ENCODE measurements at regions of chr1 and their contacts with region 1.

Region 1: DNA sequence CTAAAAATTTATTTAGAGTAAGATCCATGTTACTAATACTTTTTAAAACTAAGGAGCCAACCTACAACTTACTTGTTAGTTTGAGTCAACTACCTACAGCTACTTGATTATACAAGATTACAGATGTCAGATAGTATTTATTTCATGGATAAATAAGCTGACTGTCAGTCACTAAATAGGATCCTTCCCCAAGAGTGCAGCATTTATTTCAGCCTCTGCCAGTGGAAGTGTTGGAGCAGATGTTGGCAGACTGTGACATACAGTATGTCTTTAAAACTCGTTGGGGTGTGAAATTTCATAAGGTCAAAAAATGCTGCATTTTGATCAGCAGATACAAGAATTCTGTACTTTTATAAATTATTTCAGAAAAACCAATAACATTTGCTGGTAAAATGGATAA is 156.2 kb downstream of the AKT3 start:
- DNase-seq: no peak
- H3K4me3 ChIP-seq: no peak overlapping the region
- H3K4me3 Mint-ChIP-seq: no peak overlapping the region
- H3K27ac ChIP-seq: no peak overlapping the region
- H3K27ac Mint-ChIP-seq: no peak overlapping the region
- H3K4me1 ChIP-seq: no peaks in the 10 kb centered on the region
- H3K4me1 Mint-ChIP-seq: no peaks in the 10 kb centered on the region
- H3K27me3 ChIP-seq: no peaks in the 10 kb centered on the region
- H3K27me3 Mint-ChIP-seq: no peaks in the 10 kb centered on the region
- CTCF ChIP-seq: no peak

Region 2: GRCh38 chr1:243396876-243397275 is 296.9 kb before region 1 on chr1:
- intact Hi-C with region 1: no loop called
- DNase-seq: no peak
- H3K4me3 ChIP-seq: no peak overlapping the region
- H3K4me3 Mint-ChIP-seq: no peak overlapping the region
- H3K27ac ChIP-seq: no peak overlapping the region
- H3K27ac Mint-ChIP-seq: no peak overlapping the region
- H3K4me1 ChIP-seq: no peaks in the 10 kb centered on the region
- H3K4me1 Mint-ChIP-seq: no peaks in the 10 kb centered on the region
- H3K27me3 ChIP-seq: no peaks in the 10 kb centered on the region
- H3K27me3 Mint-ChIP-seq: no peaks in the 10 kb centered on the region
- CTCF ChIP-seq: no peak

Region 3: DNA sequence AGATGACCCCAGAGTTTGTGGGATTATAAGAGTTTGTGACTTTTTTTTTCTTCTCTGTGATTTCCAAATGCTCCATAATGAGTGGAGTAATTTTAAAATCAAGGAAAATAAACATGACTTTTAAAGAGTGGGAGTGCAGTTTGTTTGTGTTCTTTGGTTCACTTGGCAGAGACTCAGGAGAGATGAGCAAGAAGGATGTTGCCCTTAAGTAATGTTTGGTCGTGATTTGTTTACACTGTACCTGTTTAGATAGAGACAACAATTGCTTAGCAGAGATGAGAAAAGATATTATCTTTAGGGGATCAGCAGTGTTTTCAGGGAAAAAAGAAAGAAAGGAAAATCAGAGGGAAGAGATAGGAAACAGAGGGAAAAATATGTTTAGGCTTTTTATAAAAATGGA is 587.1 kb after region 1 on chr1:
- intact Hi-C with region 1: loop called in 1 of 2 experiments (anchors 10 kb)
- DNase-seq: no peak
- H3K4me3 ChIP-seq: no peak overlapping the region
- H3K4me3 Mint-ChIP-seq: no peak overlapping the region
- H3K27ac ChIP-seq: no peak overlapping the region
- H3K27ac Mint-ChIP-seq: no peak overlapping the region
- H3K4me1 ChIP-seq: peaks cover 3 to 4% of the 10 kb centered on the region in 2 donors
- H3K4me1 Mint-ChIP-seq: peaks cover 10% of the 10 kb centered on the region
- H3K27me3 ChIP-seq: no peaks in the 10 kb centered on the region
- H3K27me3 Mint-ChIP-seq: peaks cover 0 to 3% (median 2%) of the 10 kb centered on the region in 3 donors
- CTCF ChIP-seq: no peak

Measured in CD14-positive monocyte (primary cell).